ENCODE measurements at regions of chr9 and their contacts with region 1.

Region 1: DNA sequence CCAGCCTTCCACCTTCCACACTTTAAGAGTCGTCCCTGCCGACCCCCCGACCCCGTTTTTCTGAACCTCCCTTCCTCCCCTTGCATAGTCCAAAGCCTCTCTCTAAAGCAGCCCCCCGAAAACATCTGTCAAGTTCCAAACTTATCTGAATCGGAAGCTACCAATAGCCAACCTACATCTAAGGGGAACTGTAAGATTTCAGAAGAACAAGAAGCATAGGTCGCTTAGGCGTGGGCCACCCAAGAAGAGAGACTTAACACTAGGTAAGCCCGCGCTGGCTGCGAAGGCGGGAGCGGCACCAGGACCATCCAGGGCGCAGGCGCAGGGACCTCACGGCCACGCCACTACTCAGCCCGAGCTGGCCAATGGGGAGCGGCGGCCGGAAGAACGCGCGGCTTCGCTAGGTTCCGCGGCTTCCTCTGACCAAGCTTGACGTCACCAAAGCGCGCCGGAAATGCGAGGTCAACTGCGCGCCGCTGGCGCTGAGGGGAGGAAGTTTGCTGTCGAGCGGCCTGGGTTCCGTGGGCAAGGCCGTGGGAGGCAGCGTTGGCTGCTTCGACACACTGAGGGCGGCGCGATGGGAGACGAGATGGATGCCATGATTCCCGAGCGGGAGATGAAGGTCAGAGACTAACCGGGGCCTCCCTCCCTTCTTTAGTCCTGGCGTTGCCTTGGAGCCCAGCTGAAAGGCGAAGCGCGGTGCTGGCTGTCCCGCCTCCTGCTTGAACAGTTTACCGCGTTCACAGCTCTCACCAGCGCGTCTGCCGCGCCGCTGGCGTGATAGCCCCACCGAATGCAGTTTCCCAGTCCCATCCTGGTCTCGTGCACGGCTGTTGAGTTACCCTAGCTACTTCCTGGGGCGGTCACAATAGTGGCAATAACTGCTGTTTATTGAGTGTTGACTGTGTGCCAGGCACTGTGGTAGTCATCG is at the start of gene NUP214:
- DNase-seq: peak; percentile 100
- ATAC-seq: peak; percentile 99
- H3K4me3 Mint-ChIP-seq: peak within 1 kb of the TSS; percentile 98
- H3K27ac Mint-ChIP-seq: peak within 1 kb of the TSS; percentile 98
- H3K4me1 Mint-ChIP-seq: peaks cover 29% of the 10 kb centered on the region
- H3K27me3 Mint-ChIP-seq: no peaks in the 10 kb centered on the region
- CTCF ChIP-seq: no peak
- total RNA-seq, gene NUP214: 72.2 and 90.9 TPM in 2 replicates

Region 2: GRCh38 chr9:130639119-130639810 is 486.1 kb before region 1 on chr9:
- CTCF ChIA-PET with region 1: no interaction called
- POLR2A ChIA-PET with region 1: interaction called, 11 read pairs
- intact Hi-C with region 1: no loop called
- DNase-seq: no peak
- ATAC-seq: no peak
- H3K4me3 Mint-ChIP-seq: no peak overlapping the region
- H3K27ac Mint-ChIP-seq: no peak overlapping the region
- H3K4me1 Mint-ChIP-seq: no peaks in the 10 kb centered on the region
- H3K27me3 Mint-ChIP-seq: no peaks in the 10 kb centered on the region
- CTCF ChIP-seq: no peak

Region 3: GRCh38 chr9:130712564-130713285 is 412.7 kb before region 1 on chr9:
- CTCF ChIA-PET with region 1: no interaction called
- POLR2A ChIA-PET with region 1: no interaction called
- intact Hi-C with region 1: loop called (anchors 1 kb)
- DNase-seq: peak; percentile 92
- ATAC-seq: peak; percentile 97
- H3K4me3 Mint-ChIP-seq: peak overlapping the region; percentile 90
- H3K27ac Mint-ChIP-seq: peak overlapping the region; percentile 88
- H3K4me1 Mint-ChIP-seq: peaks cover 34% of the 10 kb centered on the region
- H3K27me3 Mint-ChIP-seq: no peaks in the 10 kb centered on the region
- CTCF ChIP-seq: no peak

Region 4: GRCh38 chr9:130927995-130928900 is 197.1 kb before region 1 on chr9:
- CTCF ChIA-PET with region 1: no interaction called
- POLR2A ChIA-PET with region 1: no interaction called
- intact Hi-C with region 1: no loop called
- DNase-seq: no peak
- ATAC-seq: peak; percentile 72
- H3K4me3 Mint-ChIP-seq: no peak overlapping the region
- H3K27ac Mint-ChIP-seq: peak overlapping the region; percentile 69
- H3K4me1 Mint-ChIP-seq: peaks cover 26% of the 10 kb centered on the region
- H3K27me3 Mint-ChIP-seq: peaks cover 34% of the 10 kb centered on the region
- CTCF ChIP-seq: no peak

Region 5: DNA sequence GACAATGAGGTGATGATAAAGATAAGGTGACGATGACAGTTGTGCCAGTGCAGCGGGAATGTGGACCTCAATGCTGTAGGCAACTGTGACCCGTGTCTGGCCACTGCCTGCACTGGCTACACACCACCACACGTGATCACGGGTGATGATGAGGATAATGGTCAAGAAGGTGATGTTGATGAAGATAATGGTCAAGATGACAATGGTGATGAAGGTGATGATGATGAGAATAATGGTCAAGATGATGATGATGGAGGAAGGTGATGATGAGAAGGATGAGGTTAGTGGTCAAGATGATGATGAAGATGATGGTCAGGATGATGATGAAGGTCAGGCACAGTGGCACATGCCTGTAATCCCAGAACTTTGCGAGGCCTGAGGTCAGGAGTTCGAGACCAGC is 59.8 kb before region 1 on chr9:
- CTCF ChIA-PET with region 1: no interaction called
- POLR2A ChIA-PET with region 1: no interaction called
- intact Hi-C with region 1: no loop called
- DNase-seq: no peak
- ATAC-seq: no peak
- H3K4me3 Mint-ChIP-seq: no peak overlapping the region
- H3K27ac Mint-ChIP-seq: no peak overlapping the region
- H3K4me1 Mint-ChIP-seq: no peaks in the 10 kb centered on the region
- H3K27me3 Mint-ChIP-seq: no peaks in the 10 kb centered on the region
- CTCF ChIP-seq: no peak

Region 6: DNA sequence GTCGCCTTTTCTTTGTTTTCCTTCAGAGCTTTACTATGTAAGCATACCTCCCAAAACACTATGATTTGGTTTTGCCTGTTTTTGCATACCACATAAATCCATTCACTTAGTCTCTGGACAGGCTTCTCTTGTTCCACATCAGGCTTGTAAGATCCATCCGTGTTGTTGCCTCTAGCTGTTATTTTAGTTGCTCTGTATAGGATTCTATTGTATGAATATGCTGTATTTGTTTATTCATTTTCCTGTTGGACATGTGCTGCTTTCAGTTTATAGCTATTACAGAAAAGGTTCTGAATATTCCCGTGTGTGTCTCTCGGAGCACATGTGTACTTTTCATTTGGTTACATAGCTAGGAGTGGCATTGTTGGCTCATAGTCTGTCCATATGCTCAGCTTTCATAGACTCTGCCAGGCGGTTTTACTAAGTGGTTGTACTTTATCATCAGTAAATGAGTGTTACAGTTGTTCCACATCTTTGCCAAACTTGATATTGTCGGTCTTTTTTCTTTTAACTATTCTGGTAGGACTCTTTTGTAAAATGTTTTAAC is 41.8 kb after region 1 on chr9:
- CTCF ChIA-PET with region 1: no interaction called
- POLR2A ChIA-PET with region 1: no interaction called
- intact Hi-C with region 1: no loop called
- DNase-seq: no peak
- ATAC-seq: no peak
- H3K4me3 Mint-ChIP-seq: no peak overlapping the region
- H3K27ac Mint-ChIP-seq: no peak overlapping the region
- H3K4me1 Mint-ChIP-seq: no peaks in the 10 kb centered on the region
- H3K27me3 Mint-ChIP-seq: no peaks in the 10 kb centered on the region
- CTCF ChIP-seq: no peak

Region 7: DNA sequence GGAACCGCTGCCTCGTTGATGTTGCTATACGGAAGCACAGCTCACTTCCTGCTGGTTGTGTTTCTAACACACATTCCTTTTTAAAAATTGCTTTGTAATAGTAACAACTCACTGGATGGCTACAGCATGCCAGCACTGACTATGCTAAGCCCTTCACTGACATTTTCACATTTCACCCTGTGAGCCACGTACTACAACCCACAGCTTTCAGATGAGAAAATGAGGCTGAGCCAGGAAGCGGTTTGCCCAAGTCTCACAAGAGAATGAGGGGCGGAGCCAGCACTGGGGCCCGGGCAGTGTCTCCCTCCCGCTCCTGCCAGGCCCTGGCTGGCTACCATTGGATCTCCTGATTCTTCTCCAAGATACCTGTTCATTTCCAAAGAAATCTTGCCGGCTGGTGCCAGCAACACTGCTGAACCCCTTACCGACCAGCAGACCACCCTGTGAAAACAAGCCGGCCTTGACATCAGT is 112.6 kb after region 1 on chr9:
- CTCF ChIA-PET with region 1: no interaction called
- POLR2A ChIA-PET with region 1: interaction called, 11 read pairs
- intact Hi-C with region 1: no loop called
- DNase-seq: peak; percentile 58
- ATAC-seq: peak; percentile 97
- H3K4me3 Mint-ChIP-seq: peak overlapping the region; percentile 87
- H3K27ac Mint-ChIP-seq: peak overlapping the region; percentile 96
- H3K4me1 Mint-ChIP-seq: peaks cover 17% of the 10 kb centered on the region
- H3K27me3 Mint-ChIP-seq: no peaks in the 10 kb centered on the region
- CTCF ChIP-seq: no peak

Region 8: DNA sequence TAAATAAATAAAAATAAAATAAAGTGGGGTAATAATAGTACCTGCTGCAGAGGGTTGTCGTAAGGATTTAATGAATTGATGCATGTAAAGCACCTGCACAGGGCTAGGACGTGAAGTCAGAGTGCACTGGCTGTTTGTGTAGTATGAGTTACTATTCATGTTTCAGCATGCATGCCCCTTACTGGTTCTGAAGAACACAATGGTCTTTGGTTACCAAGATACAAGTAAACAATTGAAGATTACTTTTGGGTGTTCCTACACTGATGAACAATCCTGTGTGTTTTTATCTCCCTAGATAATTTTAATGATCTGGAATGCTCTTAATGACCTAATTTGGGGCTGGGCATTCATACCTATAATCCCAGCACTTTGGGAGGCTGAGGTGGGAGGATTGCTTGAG is 245.2 kb after region 1 on chr9:
- CTCF ChIA-PET with region 1: no interaction called
- POLR2A ChIA-PET with region 1: interaction called, 9 read pairs
- intact Hi-C with region 1: loop called (anchors 1 kb)
- DNase-seq: no peak
- ATAC-seq: no peak
- H3K4me3 Mint-ChIP-seq: no peak overlapping the region
- H3K27ac Mint-ChIP-seq: no peak overlapping the region
- H3K4me1 Mint-ChIP-seq: peaks cover 22% of the 10 kb centered on the region
- H3K27me3 Mint-ChIP-seq: no peaks in the 10 kb centered on the region
- CTCF ChIP-seq: no peak

Region 9: DNA sequence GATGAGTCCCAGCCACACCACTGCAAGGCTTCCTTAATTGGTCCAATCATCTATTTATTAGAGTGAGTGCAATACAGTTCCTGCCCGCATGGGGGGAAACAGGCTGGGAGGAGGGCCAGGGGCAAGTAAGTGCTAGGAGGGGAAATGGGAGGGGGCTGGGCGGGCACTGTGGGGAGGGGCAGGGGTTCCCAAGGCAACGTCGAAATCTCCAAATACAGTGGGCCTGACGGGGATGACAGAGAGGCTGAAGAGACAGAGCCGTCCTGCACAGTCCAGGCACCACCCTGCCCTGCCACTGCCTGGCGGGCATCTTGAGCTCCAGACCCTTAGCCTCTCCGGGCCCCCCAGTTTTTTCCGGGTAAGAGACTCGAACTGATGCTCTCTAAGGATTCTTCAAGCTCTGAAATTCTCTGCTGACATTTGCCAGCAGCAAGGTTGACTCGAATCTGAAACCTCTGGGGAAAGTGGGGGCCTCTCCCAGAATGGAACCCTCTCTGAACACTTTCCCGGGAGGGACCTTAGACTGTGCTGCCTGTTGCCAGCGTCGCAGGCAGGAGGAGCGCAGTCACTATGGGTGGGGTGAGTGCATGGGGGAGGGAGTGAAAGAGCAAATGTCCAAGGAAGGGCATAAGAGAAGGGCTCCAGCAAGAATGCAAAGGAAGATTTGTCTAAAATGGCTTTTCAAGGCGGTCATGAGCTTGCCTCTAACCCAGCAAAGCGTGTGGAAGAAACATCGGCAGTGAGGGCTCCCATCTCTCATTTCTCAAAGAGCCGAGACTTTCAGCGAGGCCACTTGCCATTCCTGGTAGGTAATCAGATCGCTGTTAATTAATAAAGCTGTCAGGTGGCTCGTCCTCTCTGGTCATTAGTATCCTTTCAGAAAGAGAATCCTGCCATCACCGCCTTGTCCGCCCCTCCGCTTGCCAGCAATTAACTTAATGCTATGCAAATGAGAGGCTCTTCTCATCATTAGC is 1643.8 kb after region 1 on chr9:
- CTCF ChIA-PET with region 1: no interaction called
- POLR2A ChIA-PET with region 1: interaction called, 4 read pairs
- intact Hi-C with region 1: loop called (anchors 2 kb)
- DNase-seq: peak; percentile 50
- ATAC-seq: peak; percentile 76
- H3K4me3 Mint-ChIP-seq: peak overlapping the region; percentile 100
- H3K27ac Mint-ChIP-seq: peak overlapping the region; percentile 98
- H3K4me1 Mint-ChIP-seq: peaks cover 22% of the 10 kb centered on the region
- H3K27me3 Mint-ChIP-seq: no peaks in the 10 kb centered on the region
- CTCF ChIP-seq: no peak

Measured in activated B cell treated with CpG ODN at 0.5 μM for 24 hours (primary cell).